ENCODE measurements at regions of chr4 and their contacts with region 1.

Region 1: GRCh38 chr4:48002267-48002666 is 14.2 kb downstream of the CNGA1 start:
- DNase-seq: no peak
- H3K4me3 ChIP-seq: no peak overlapping the region
- H3K27ac ChIP-seq: no peak overlapping the region
- H3K4me1 ChIP-seq: no peaks in the 10 kb centered on the region
- H3K27me3 ChIP-seq: no peaks in the 10 kb centered on the region
- CTCF ChIP-seq: no peak
- POLR2A ChIP-seq: no peak

Region 2: DNA sequence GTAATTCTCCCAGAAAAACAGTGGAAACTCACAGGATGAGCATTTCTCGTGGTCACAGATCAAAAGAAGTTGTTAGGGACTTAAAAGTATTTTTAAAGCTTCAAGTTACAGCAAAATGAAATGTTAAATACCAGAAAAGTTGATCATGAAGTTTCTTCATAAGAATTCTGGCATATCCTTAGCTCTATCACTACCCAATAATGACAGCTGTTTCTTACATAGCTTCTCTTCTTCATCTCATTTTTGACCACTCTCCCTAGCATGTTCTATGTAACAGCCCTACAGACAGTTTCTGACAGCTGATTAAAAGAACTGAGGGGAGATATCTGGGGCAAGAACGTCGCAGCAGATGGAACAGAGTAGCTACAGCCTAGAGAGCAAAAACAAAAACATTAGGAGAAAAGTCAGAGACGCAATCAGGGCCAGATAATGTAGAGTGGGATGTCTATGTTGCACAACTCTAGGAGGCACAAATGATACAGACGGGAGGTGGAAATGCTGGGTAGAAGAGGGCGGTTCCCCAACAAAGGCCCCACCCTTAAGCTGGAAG is 273.1 kb before region 1 on chr4:
- intact Hi-C with region 1: no loop called
- DNase-seq: no peak
- H3K4me3 ChIP-seq: no peak overlapping the region
- H3K27ac ChIP-seq: no peak overlapping the region
- H3K4me1 ChIP-seq: no peaks in the 10 kb centered on the region
- H3K27me3 ChIP-seq: no peaks in the 10 kb centered on the region
- CTCF ChIP-seq: no peak
- POLR2A ChIP-seq: no peak

Region 3: GRCh38 chr4:48079972-48080391 is 77.7 kb after region 1 on chr4:
- intact Hi-C with region 1: loop called (anchors 5 kb)
- DNase-seq: no peak
- H3K4me3 ChIP-seq: no peak overlapping the region
- H3K27ac ChIP-seq: no peak overlapping the region
- H3K4me1 ChIP-seq: no peaks in the 10 kb centered on the region
- H3K27me3 ChIP-seq: no peaks in the 10 kb centered on the region
- CTCF ChIP-seq: no peak
- POLR2A ChIP-seq: no peak

Region 4: DNA sequence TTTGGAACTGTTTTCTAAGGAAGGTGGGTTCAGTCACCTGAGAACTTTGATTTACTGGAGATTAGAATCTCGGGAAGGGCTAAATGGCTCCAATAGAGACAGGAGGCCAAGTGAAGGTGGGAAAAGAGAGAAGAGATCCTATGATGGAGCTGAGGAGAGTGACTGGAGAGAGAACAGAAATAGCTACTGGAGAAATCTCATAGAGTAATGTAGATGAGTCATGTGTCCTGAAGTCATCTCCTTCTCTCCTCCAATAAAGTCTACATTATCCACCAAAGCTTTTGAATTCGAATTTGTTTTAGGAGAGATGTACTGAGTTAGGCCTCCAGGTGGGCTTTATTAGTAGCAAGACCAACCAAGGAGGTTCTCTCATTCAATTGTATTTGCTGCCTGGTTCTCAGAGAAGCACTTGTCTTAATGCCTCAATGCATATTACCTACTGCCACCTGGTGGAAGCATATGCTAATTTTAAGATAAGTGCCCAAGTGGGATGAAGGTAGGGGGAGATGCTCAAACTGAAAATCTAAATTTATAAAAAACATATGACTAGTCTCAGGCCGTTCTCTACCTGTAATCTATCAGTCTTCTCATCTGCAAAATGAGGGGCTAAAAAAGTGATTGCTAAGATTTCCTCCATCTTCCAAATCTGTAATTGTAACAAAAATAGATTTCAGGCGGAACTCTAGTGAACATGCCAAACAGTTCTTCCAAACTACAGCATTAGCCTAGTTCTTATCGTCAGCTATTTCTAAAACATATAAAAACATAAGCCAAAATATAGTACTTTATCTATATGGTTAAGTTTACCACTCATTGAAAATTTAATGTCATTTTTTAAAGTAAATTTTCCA is 107.4 kb after region 1 on chr4:
- intact Hi-C with region 1: no loop called
- DNase-seq: no peak
- H3K4me3 ChIP-seq: no peak overlapping the region
- H3K27ac ChIP-seq: no peak overlapping the region
- H3K4me1 ChIP-seq: no peaks in the 10 kb centered on the region
- H3K27me3 ChIP-seq: no peaks in the 10 kb centered on the region
- CTCF ChIP-seq: peak in 5 of 6 experiments; percentile 15 to 68 (median 52)
- POLR2A ChIP-seq: no peak